ENCODE measurements at regions of chr11 and their contacts with region 1.

Region 1: GRCh38 chr11:117327567-117328374 is at the start of gene CEP164:
- DNase-seq: peak; percentile 97
- ATAC-seq: peak; percentile 92
- H3K4me3 ChIP-seq: peak within 1 kb of the TSS; percentile 57 to 88 (median 79)
- H3K4me3 Mint-ChIP-seq: peak within 1 kb of the TSS; percentile 71
- H3K27ac ChIP-seq: peak within 1 kb of the TSS; percentile 84 to 89
- H3K27ac Mint-ChIP-seq: peak within 1 kb of the TSS; percentile 65
- H3K4me1 ChIP-seq: peaks cover 6 to 11% of the 10 kb centered on the region in 2 donors
- H3K4me1 Mint-ChIP-seq: peaks cover 8% of the 10 kb centered on the region
- H3K27me3 ChIP-seq: no peaks in the 10 kb centered on the region
- H3K27me3 Mint-ChIP-seq: no peaks in the 10 kb centered on the region
- CTCF ChIP-seq: no peak
- total RNA-seq, gene CEP164: 48.7 and 54.8 TPM in 2 replicates

Region 2: DNA sequence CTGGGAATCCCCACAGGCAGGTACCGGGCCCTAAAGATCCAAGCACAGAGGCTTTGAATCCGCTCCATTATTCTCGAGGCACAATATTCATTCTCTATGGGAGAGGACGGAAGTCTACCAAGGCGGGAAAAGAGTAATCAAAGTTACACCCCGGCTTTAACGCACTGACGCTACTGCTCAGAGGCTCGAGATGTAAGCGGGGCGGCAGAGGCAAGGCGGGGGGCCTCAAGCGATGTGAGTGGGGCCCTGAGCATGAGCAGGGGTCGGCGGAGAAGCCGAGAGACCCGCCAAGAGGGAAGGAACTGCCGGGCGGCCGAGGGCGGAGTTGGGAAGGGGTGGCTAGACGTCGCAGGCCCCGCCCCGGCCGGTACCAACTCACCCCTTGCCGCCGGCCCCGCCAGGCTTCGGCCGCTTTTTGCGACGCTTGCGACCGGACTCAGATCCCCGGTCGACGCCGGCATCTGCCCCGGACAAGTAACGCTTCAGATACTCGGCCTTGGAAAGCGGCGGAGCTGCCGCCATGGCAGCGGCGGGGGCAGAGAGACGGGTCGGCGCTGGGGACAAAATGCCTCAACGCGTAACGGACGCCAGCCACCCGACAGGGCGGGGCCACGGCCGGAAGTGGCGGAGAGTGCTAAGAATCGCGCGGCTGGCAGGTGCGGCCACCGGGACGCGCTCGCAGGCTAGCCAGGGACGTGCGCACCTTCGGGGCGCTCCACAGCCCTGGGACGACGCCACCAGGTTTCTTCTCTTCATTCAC is 555.1 kb before region 1 on chr11 and contains the start of gene BUD13:
- CTCF ChIA-PET with region 1: no interaction called
- POLR2A ChIA-PET with region 1: no interaction called
- intact Hi-C with region 1: loop called (anchors 2 kb)
- DNase-seq: peak; percentile 96
- ATAC-seq: peak; percentile 89
- H3K4me3 ChIP-seq: peak within 1 kb of the TSS; percentile 71 to 99 (median 95)
- H3K4me3 Mint-ChIP-seq: peak within 1 kb of the TSS; percentile 93
- H3K27ac ChIP-seq: peak within 1 kb of the TSS; percentile 85 to 96
- H3K27ac Mint-ChIP-seq: peak within 1 kb of the TSS; percentile 93
- H3K4me1 ChIP-seq: peaks cover 23 to 28% of the 10 kb centered on the region in 2 donors
- H3K4me1 Mint-ChIP-seq: peaks cover 34% of the 10 kb centered on the region
- H3K27me3 ChIP-seq: no peaks in the 10 kb centered on the region
- H3K27me3 Mint-ChIP-seq: no peaks in the 10 kb centered on the region
- CTCF ChIP-seq: no peak
- total RNA-seq, gene BUD13: 24.2 and 24.8 TPM in 2 replicates

Region 3: GRCh38 chr11:117045956-117046355 is 281.8 kb before region 1 on chr11:
- CTCF ChIA-PET with region 1: no interaction called
- POLR2A ChIA-PET with region 1: no interaction called
- intact Hi-C with region 1: no loop called
- DNase-seq: no peak
- ATAC-seq: no peak
- H3K4me3 ChIP-seq: no peak overlapping the region
- H3K4me3 Mint-ChIP-seq: no peak overlapping the region
- H3K27ac ChIP-seq: no peak overlapping the region
- H3K27ac Mint-ChIP-seq: no peak overlapping the region
- H3K4me1 ChIP-seq: peaks cover 6 to 25% of the 10 kb centered on the region in 2 donors
- H3K4me1 Mint-ChIP-seq: peaks cover 63% of the 10 kb centered on the region
- H3K27me3 ChIP-seq: no peaks in the 10 kb centered on the region
- H3K27me3 Mint-ChIP-seq: no peaks in the 10 kb centered on the region
- CTCF ChIP-seq: no peak

Region 4: DNA sequence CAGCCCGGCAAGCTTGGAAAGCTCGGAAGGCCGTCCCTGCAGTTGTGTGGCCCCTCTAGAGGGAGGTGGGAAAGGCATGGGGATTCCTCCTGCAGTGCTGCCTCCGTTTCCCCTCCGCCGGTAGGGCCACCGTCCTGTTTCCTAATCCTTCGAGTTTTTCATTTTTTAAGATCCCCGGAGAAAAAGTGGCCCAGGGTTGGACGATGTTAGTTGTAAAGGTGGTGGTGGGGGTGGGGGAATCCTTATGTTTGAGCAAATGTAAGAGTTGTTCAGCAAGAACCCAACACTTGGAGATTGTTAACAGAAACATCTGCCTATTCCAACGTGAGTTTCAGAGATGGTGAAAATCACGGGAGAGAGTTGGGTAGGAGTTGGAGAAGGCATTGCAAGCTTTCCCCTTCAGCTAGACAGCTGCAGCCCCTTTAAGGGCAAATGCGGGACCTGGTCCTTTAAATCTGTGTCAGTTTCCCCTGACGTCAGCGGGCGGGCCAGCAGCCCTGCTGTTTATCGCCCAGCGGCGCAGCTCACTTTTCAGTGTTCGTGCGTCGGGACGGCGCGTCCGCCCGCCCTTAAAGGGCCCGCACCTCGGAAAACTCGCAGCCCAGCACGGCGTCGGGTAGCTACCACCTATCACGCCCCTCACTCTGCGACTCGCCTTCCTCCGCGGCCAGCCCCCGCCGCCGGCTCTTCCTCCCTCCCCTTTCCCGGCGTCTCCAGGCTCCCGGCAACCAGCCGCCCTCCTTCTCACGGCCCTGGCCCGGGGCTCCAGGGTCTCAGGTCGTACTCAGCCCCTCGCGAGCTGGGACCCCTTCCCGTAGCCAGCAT is 149.3 kb before region 1 on chr11 and contains the start of gene SIDT2:
- CTCF ChIA-PET with region 1: no interaction called
- POLR2A ChIA-PET with region 1: no interaction called
- intact Hi-C with region 1: no loop called
- DNase-seq: peak; percentile 92
- ATAC-seq: peak; percentile 88
- H3K4me3 ChIP-seq: peak within 1 kb of the TSS; percentile 68 to 85 (median 81)
- H3K4me3 Mint-ChIP-seq: peak within 1 kb of the TSS; percentile 99
- H3K27ac ChIP-seq: peak within 1 kb of the TSS; percentile 84
- H3K27ac Mint-ChIP-seq: peak within 1 kb of the TSS; percentile 96
- H3K4me1 ChIP-seq: peaks cover 27 to 39% of the 10 kb centered on the region in 2 donors
- H3K4me1 Mint-ChIP-seq: peaks cover 36% of the 10 kb centered on the region
- H3K27me3 ChIP-seq: no peaks in the 10 kb centered on the region
- H3K27me3 Mint-ChIP-seq: no peaks in the 10 kb centered on the region
- CTCF ChIP-seq: no peak
- total RNA-seq, gene SIDT2: 241 and 245 TPM in 2 replicates

Region 5: GRCh38 chr11:117232092-117232878 is 95.5 kb before region 1 on chr11 and contains the start of gene RNF214:
- CTCF ChIA-PET with region 1: interaction called, 6 read pairs
- POLR2A ChIA-PET with region 1: no interaction called
- intact Hi-C with region 1: loop called (anchors 1 kb)
- DNase-seq: peak; percentile 89
- ATAC-seq: peak; percentile 78
- H3K4me3 ChIP-seq: peak within 1 kb of the TSS; percentile 64 to 99 (median 91)
- H3K4me3 Mint-ChIP-seq: peak within 1 kb of the TSS; percentile 95
- H3K27ac ChIP-seq: peak within 1 kb of the TSS; percentile 82 to 84
- H3K27ac Mint-ChIP-seq: peak within 1 kb of the TSS; percentile 99
- H3K4me1 ChIP-seq: peaks cover 34 to 38% of the 10 kb centered on the region in 2 donors
- H3K4me1 Mint-ChIP-seq: peaks cover 48% of the 10 kb centered on the region
- H3K27me3 ChIP-seq: no peaks in the 10 kb centered on the region
- H3K27me3 Mint-ChIP-seq: no peaks in the 10 kb centered on the region
- CTCF ChIP-seq: peak; percentile 83
- total RNA-seq, gene RNF214: 33.6 and 36.1 TPM in 2 replicates

Region 6: GRCh38 chr11:117384041-117384440 is 56.3 kb after region 1 on chr11:
- CTCF ChIA-PET with region 1: no interaction called
- POLR2A ChIA-PET with region 1: no interaction called
- intact Hi-C with region 1: no loop called
- DNase-seq: no peak
- ATAC-seq: no peak
- H3K4me3 ChIP-seq: no peak overlapping the region
- H3K4me3 Mint-ChIP-seq: no peak overlapping the region
- H3K27ac ChIP-seq: no peak overlapping the region
- H3K27ac Mint-ChIP-seq: no peak overlapping the region
- H3K4me1 ChIP-seq: no peaks in the 10 kb centered on the region
- H3K4me1 Mint-ChIP-seq: no peaks in the 10 kb centered on the region
- H3K27me3 ChIP-seq: no peaks in the 10 kb centered on the region
- H3K27me3 Mint-ChIP-seq: no peaks in the 10 kb centered on the region
- CTCF ChIP-seq: no peak

Region 7: DNA sequence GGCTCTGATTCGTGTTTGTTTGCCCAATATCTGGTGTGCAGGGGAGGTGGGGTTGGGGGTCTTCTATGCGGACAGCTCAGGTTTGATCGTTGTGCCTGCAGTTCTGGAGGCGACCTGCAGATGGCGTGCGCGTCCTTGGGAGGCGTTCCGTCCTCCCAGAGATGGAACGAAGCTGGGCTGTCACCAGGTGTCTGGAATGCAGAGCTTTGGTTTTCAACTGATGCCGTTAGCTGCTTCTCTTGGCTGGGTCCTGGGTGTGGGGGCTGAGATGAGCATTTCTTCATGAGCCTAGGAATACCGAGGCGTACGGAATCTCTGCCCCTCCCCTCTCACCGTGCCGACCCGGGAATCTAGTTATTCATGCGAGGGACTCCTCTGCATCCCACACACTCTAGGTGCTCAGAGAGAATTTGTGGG is 98.5 kb after region 1 on chr11:
- CTCF ChIA-PET with region 1: no interaction called
- POLR2A ChIA-PET with region 1: interaction called, 11 read pairs
- intact Hi-C with region 1: no loop called
- DNase-seq: peak; percentile 65
- ATAC-seq: peak; percentile 49
- H3K4me3 ChIP-seq: no peak overlapping the region
- H3K4me3 Mint-ChIP-seq: no peak overlapping the region
- H3K27ac ChIP-seq: no peak overlapping the region
- H3K27ac Mint-ChIP-seq: peak overlapping the region; percentile 37
- H3K4me1 ChIP-seq: peaks cover 0 to 8% of the 10 kb centered on the region in 2 donors
- H3K4me1 Mint-ChIP-seq: peaks cover 8% of the 10 kb centered on the region
- H3K27me3 ChIP-seq: peaks cover 0 to 13% (median 0%) of the 10 kb centered on the region in 4 experiments
- H3K27me3 Mint-ChIP-seq: peaks cover 5% of the 10 kb centered on the region
- CTCF ChIP-seq: peak; percentile 97